Transverse colon (tissue), 4 donors: ENCODE measurements at regions of chr4 and their contacts with region 1.

Region 1: GRCh38 chr4:152321923-152322322 is 214.0 kb downstream of the FBXW7 start:
- DNase-seq: no peak
- H3K4me3 ChIP-seq: no peak overlapping the region
- H3K27ac ChIP-seq: no peak overlapping the region
- H3K4me1 ChIP-seq: peaks cover 0 to 2% (median 0%) of the 10 kb centered on the region in 4 donors
- H3K27me3 ChIP-seq: no peaks in the 10 kb centered on the region
- CTCF ChIP-seq: no peak
- EP300 ChIP-seq: no peak
- POLR2A ChIP-seq: no peak

Region 2: GRCh38 chr4:152454398-152455011 is 132.6 kb after region 1 on chr4:
- in situ Hi-C with region 1: no loop called
- intact Hi-C with region 1: loop called (anchors 5 kb)
- DNase-seq: no peak
- H3K4me3 ChIP-seq: no peak overlapping the region
- H3K27ac ChIP-seq: no peak overlapping the region
- H3K4me1 ChIP-seq: peaks cover 0 to 23% (median under 1%) of the 10 kb centered on the region in 4 donors
- H3K27me3 ChIP-seq: no peaks in the 10 kb centered on the region
- CTCF ChIP-seq: peak; percentile 30 to 46 (median 42)
- EP300 ChIP-seq: no peak
- POLR2A ChIP-seq: no peak